HEK293 (cell line): ENCODE measurements at regions of chr1 and their contacts with region 1.

Region 1: GRCh38 chr1:7667625-7668218 is 103.4 kb upstream of the VAMP3 start:
- H3K4me3 ChIP-seq: no peak overlapping the region
- H3K27ac ChIP-seq: no peak overlapping the region
- H3K4me1 ChIP-seq: no peaks in the 10 kb centered on the region
- CTCF ChIP-seq: peak; percentile 98

Region 2: DNA sequence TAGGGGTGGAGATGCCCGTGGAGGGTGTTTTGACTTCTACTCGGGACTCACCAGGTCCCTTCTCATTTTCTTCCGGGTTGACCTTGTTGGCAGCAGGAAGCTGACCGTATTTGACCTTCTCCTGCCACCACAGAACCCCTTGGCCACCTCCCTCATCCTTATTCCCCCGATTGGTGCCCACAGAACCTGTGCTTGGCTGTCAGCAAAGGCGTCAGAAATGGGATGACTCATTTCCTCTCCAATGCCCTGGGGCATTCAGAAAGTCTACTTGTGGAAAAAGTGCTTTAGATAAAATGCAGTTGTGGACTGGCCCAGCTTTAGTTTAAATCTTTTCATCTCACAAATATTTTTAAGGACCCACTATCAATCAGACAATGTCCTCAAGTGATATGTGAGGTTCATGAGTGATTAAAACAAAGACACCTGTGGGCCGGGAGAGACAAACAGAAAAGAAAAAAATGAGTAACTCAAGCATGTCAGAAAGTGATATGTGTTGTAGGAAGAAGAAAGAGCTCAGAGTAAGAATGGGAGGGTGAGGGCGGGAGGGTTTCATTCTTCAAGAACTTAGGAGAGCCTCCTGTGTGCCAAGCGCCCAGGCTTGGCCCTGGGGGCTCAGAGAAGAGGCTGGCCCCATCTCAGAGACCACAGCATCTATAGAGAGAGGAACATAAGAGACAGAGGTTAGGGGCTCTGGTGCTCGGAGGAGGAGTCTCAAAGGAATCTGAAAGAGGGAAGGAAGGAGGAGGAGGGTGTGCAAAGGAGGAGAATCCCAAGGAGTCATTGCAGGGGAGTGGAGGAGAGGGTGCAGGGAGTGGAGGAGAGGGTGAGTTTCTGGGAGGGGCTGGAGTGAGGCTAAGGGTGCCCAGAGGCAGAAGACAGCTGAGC is 118.2 kb before region 1 on chr1:
- CTCF ChIA-PET with region 1: no interaction called
- POLR2A ChIA-PET with region 1: no interaction called
- H3K4me3 ChIP-seq: no peak overlapping the region
- H3K27ac ChIP-seq: peak overlapping the region; percentile 8; the same call in 1 of the 2 replicates
- H3K4me1 ChIP-seq: peaks cover 4% of the 10 kb centered on the region; the same call in 1 of the 2 replicates
- CTCF ChIP-seq: no peak

Region 3: DNA sequence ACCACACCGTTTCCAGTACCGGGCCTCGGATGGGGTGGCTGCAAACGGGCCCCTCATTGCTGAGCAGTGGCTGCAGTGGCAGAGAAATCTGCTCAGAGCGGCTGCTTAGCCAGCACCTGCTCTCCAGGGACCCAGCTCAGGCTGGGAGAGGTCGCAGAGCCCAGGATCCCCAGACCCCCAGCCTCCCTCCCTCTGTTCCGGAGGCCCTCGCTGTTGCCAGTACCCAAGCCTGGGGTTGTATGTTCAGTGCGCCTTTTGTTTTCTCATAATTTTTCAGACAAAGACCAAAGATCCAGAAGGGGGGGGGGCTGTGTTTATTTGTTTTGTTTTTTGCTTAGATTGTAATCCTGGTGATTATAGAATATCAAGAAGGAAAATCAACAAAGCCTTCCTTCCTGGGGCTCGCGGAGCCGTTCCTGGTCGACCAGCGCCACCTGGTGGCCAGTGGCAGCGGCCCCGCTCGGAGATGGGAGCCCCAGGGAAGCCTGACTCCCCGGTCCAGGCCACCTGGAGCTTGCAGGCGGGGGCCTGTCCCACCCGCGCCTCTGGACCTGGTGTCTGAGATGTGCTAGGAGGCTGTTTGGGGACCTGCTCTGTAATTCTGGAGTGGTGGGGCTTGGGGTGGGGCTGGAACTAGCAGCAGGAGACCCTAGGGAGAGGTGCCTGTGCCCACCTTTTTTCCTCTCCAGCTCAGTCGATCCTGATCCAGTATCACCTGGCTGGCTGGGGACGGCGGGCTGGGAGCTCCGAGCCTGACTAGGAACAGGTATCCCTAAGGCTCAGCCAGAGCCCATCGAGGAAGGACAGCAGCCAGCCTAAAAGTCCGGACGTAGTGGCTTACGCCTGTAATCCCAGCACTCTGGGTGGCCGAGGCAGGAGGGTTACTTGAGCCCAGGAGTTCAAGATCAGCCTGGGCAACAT is 20.5 kb before region 1 on chr1:
- CTCF ChIA-PET with region 1: interaction called, 22 read pairs
- POLR2A ChIA-PET with region 1: no interaction called
- H3K4me3 ChIP-seq: no peak overlapping the region
- H3K27ac ChIP-seq: no peak overlapping the region
- H3K4me1 ChIP-seq: no peaks in the 10 kb centered on the region
- CTCF ChIP-seq: peak; percentile 56

Region 4: DNA sequence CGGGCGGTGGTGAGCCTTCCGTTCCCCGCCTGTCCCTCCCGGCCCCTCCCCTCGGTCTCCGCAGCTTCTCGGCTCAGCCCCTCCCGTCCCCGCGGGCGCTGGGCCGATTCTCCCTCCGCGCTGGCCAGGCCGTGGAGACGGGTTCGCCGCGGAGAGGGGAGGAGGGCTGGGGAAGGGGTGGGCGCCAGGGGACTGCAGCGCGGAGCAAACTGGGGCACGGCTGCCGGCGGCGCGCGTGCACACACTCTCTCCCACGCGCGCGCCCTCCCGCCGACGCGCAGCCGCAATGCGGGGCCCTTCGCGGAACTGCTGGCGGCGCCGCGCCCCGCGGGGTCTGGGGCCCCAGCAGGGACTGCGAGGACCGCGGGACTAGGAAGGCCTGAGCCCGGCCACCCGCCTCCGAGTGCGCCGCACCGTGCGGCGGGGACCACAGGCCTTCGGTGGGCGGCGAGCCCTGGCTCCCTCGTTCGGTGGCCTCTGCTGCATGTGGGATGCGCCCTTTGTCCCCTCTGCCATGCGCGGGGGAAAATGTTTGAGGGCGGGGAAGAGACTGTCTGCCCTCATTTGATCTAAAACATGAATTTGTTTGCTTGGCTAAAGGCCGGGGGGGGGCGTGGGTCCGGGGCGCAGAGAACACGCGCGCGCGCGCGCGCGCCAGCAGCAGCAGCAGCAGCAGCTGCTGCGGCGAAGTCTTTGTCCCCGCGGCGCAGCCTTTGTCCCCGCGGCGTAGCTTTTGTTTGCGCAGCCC is 12.7 kb after region 1 on chr1:
- CTCF ChIA-PET with region 1: interaction called, 93 read pairs
- POLR2A ChIA-PET with region 1: no interaction called
- H3K4me3 ChIP-seq: peak overlapping the region; percentile 54
- H3K27ac ChIP-seq: peak overlapping the region; percentile 61; the same call in 1 of the 2 replicates
- H3K4me1 ChIP-seq: no peaks in the 10 kb centered on the region
- CTCF ChIP-seq: no peak

Region 5: GRCh38 chr1:7733276-7733675 is 65.6 kb after region 1 on chr1:
- CTCF ChIA-PET with region 1: interaction called, 11 read pairs
- POLR2A ChIA-PET with region 1: no interaction called
- H3K4me3 ChIP-seq: no peak overlapping the region
- H3K27ac ChIP-seq: no peak overlapping the region
- H3K4me1 ChIP-seq: no peaks in the 10 kb centered on the region
- CTCF ChIP-seq: no peak

Region 6: GRCh38 chr1:7752512-7753417 is 85.0 kb after region 1 on chr1:
- CTCF ChIA-PET with region 1: interaction called, 519 read pairs
- POLR2A ChIA-PET with region 1: interaction called, 8 read pairs
- H3K4me3 ChIP-seq: no peak overlapping the region
- H3K27ac ChIP-seq: no peak overlapping the region
- H3K4me1 ChIP-seq: no peaks in the 10 kb centered on the region
- CTCF ChIP-seq: peak; percentile 50

Region 7: GRCh38 chr1:7768583-7768982 is 100.9 kb after region 1 on chr1:
- CTCF ChIA-PET with region 1: interaction called, 76 read pairs
- POLR2A ChIA-PET with region 1: no interaction called
- H3K4me3 ChIP-seq: no peak overlapping the region
- H3K27ac ChIP-seq: no peak overlapping the region
- H3K4me1 ChIP-seq: no peaks in the 10 kb centered on the region
- CTCF ChIP-seq: no peak

Region 8: DNA sequence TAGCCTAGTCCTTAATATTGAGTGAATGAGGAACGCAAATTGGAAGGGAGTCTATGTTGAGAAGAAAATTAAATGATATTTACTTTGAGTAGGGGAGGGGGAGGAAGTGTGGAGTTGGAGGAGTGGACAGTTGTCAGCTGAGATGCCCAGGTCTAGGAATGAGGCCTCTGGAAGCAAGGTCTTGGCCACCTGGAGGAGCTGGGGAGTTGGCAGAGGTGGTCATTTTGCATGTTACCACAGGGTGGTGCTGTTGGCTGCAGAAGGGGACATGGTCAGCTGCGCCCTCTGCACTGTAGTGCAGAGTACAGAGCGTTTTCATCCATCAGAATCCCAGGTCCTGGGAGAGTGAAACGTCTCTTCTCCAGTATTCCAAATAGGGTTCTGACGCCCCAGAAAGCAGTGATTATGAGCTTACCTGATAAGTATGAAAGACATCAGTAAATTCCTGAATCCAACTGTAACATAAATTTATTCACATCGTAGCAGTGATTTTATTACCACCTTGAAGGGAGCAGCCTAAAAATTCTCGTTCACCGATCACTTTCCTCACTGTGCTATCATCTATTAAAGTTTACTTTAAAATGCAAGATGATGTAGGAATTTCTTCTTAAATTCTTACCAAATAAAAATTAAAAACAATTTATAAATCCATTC is 307.6 kb after region 1 on chr1:
- CTCF ChIA-PET with region 1: interaction called, 23 read pairs
- POLR2A ChIA-PET with region 1: no interaction called
- H3K4me3 ChIP-seq: no peak overlapping the region
- H3K27ac ChIP-seq: no peak overlapping the region
- H3K4me1 ChIP-seq: no peaks in the 10 kb centered on the region
- CTCF ChIP-seq: peak; percentile 99